MCF 10A (cell line): ENCODE measurements at regions of chr4 and their contacts with region 1.

Region 1: DNA sequence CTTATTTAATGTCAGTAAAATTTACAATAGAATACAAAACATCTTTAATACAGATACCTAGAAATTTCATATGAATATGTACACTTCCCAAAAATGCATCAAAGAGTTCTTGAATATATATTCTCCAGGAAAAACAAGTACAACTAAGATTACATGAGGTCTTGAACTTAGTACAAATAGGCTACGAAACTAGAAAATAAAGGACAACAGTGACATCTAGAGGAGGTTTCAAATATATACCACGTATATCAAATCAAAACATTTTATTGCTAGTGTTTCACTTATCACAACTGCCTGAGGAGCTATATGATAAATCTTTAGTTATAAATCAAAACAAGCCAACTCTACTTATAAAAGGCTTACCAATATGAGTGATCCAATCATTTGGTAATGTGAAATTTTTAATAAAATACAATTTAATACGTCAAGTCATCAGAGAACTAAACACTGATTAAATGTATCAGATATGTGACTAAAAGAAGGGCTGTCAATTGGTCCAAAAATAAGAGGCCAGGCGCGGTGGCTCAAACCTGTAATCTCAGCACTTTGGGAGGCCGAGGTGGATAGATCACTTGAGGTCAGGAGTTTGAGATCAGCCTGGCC is 36.6 kb downstream of the ANAPC10 start:
- DNase-seq: peak; percentile 60
- H3K4me3 Mint-ChIP-seq: no peak overlapping the region
- H3K27ac Mint-ChIP-seq: no peak overlapping the region
- H3K4me1 Mint-ChIP-seq: no peaks in the 10 kb centered on the region
- H3K27me3 Mint-ChIP-seq: no peaks in the 10 kb centered on the region
- CTCF ChIP-seq: peak; percentile 34

Region 2: GRCh38 chr4:144355809-144356757 is 705.3 kb before region 1 on chr4:
- CTCF ChIA-PET with region 1: interaction called, 3 read pairs
- POLR2A ChIA-PET with region 1: no interaction called
- intact Hi-C with region 1: loop called (anchors 5 kb)
- DNase-seq: peak; percentile 87
- H3K4me3 Mint-ChIP-seq: no peak overlapping the region
- H3K27ac Mint-ChIP-seq: no peak overlapping the region
- H3K4me1 Mint-ChIP-seq: peaks cover 8% of the 10 kb centered on the region
- H3K27me3 Mint-ChIP-seq: no peaks in the 10 kb centered on the region
- CTCF ChIP-seq: no peak

Region 3: GRCh38 chr4:144557404-144557803 is 504.0 kb before region 1 on chr4:
- CTCF ChIA-PET with region 1: no interaction called
- POLR2A ChIA-PET with region 1: no interaction called
- intact Hi-C with region 1: loop called (anchors 1 kb)
- DNase-seq: peak; percentile 14
- H3K4me3 Mint-ChIP-seq: no peak overlapping the region
- H3K27ac Mint-ChIP-seq: no peak overlapping the region
- H3K4me1 Mint-ChIP-seq: no peaks in the 10 kb centered on the region
- H3K27me3 Mint-ChIP-seq: no peaks in the 10 kb centered on the region
- CTCF ChIP-seq: peak; percentile 20

Region 4: DNA sequence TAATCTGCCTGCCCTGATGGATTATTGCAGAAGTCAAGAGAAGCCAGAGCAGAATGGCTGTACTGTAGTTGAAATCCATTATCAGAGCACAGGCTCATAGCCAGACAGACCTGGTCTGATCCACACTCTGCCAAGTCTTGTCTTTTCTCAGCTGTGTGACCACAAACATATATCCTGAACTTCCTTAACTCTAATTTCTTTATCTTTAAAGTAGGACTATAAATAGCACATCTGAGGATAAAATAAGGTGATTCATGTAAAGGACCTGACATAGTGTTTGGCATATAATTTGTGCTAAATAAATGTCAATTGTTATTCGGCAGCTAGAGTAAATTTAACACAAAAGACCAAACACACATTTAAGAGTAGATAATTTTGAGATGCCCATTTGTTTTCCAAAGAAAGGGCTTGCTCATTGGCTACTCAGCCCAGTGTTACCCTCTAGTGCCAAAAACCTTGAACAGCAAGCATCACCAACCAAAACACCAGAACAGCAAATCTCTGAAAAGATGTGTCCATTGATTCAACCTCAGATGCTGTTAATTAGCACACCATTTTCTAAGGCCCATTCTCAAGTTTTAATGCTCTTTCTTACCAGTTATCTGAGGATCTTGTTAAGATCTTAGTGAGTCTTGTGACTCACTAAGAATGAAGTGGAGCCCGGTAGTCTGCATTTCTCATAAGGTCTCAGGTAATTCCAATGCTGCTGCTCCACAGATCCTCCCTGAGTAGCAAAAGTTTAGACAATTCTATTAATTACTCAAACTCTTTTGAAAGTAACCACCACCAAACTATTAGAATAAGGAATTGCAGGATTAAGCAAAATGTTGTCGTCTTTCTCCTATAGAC is 306.6 kb before region 1 on chr4:
- CTCF ChIA-PET with region 1: interaction called, 6 read pairs
- POLR2A ChIA-PET with region 1: no interaction called
- intact Hi-C with region 1: loop called (anchors 5 kb)
- DNase-seq: peak; percentile 35
- H3K4me3 Mint-ChIP-seq: no peak overlapping the region
- H3K27ac Mint-ChIP-seq: no peak overlapping the region
- H3K4me1 Mint-ChIP-seq: no peaks in the 10 kb centered on the region
- H3K27me3 Mint-ChIP-seq: no peaks in the 10 kb centered on the region
- CTCF ChIP-seq: peak; percentile 66

Region 5: DNA sequence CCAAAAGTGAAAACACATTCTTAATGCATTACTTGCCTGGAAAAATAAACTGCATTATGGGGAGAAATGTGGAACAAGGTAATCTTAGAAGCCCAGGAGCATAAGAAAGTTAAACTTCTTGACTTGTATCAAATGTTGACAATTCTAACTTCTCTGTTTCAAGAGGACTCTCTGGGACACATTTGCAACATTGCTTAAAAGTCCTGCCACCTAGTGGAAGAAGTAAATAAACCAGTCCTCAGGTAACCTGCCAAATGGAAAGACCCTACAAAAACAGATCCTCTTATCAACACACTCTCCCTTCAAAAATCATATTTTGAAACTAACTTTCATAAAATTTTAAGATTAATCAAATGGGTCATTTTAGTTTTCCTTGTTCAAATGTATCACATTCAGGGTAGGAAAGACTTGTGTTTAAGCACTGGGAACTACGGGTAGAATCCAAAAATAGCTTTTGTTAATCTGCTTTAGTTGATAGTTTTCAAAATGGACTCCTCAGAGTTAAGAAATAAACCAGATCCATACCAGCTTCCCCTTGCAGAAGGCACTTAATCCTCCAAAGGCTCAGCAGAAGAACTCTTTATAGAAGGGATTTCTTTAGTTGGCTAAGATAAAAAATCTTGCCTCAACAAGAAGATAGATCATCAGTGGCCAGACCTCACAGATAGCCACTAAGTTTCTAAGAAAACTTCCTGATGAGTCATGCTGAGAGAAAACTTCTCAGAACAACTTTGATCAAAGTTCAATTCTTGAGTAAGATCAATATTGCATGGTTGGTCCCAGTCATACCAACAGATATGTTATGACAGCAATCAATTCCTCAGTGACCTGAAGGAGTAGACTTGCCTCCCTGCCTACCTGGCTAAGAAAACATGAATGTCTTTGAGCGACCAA is 273.8 kb before region 1 on chr4:
- CTCF ChIA-PET with region 1: interaction called, 4 read pairs
- POLR2A ChIA-PET with region 1: no interaction called
- intact Hi-C with region 1: loop called (anchors 10 kb)
- DNase-seq: peak; percentile 56
- H3K4me3 Mint-ChIP-seq: no peak overlapping the region
- H3K27ac Mint-ChIP-seq: no peak overlapping the region
- H3K4me1 Mint-ChIP-seq: peaks cover 6% of the 10 kb centered on the region
- H3K27me3 Mint-ChIP-seq: no peaks in the 10 kb centered on the region
- CTCF ChIP-seq: peak; percentile 55